ENCODE measurements at regions of chr7 and their contacts with region 1.

Region 1: GRCh38 chr7:64266341-64266919 is 38.2 kb downstream of the ZNF679 start:
- DNase-seq: no peak
- ATAC-seq: no peak
- H3K4me3 ChIP-seq: no peak overlapping the region
- H3K27ac ChIP-seq: no peak overlapping the region
- H3K4me1 ChIP-seq: no peaks in the 10 kb centered on the region
- H3K27me3 ChIP-seq: no peaks in the 10 kb centered on the region
- CTCF ChIP-seq: no peak

Region 2: GRCh38 chr7:63953181-63953580 is 313.2 kb before region 1 on chr7:
- CTCF ChIA-PET with region 1: no interaction called
- POLR2A ChIA-PET with region 1: no interaction called
- in situ Hi-C with region 1: no loop called
- intact Hi-C with region 1: no loop called
- DNase-seq: no peak
- ATAC-seq: no peak
- H3K4me3 ChIP-seq: no peak overlapping the region
- H3K27ac ChIP-seq: no peak overlapping the region
- H3K4me1 ChIP-seq: no peaks in the 10 kb centered on the region
- H3K27me3 ChIP-seq: no peaks in the 10 kb centered on the region
- CTCF ChIP-seq: no peak

Region 3: GRCh38 chr7:64183126-64183742 is 83.2 kb before region 1 on chr7:
- CTCF ChIA-PET with region 1: no interaction called
- POLR2A ChIA-PET with region 1: no interaction called
- in situ Hi-C with region 1: no loop called
- intact Hi-C with region 1: no loop called
- DNase-seq: no peak
- ATAC-seq: no peak
- H3K4me3 ChIP-seq: no peak overlapping the region
- H3K27ac ChIP-seq: no peak overlapping the region
- H3K4me1 ChIP-seq: no peaks in the 10 kb centered on the region
- H3K27me3 ChIP-seq: no peaks in the 10 kb centered on the region
- CTCF ChIP-seq: peak; percentile 70

Region 4: DNA sequence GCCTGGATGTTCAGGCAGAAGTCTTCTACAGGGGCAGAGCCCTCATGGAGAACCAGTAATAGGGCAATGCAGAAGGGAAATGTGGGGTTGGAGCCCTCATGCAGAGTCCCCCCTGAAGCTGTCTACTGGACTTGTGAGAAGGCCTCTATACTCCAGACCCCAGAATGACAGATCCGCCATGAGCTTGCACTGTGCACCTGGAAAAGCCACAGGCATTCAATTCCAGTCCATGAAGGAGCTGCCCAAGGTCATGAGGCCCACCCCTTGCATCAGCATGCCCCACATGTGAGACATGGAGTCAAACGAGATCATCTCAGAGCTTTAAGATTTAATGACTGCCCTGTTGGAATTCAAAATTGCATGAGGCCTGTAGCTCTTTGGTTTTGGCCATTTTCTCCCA is 43.1 kb before region 1 on chr7:
- CTCF ChIA-PET with region 1: no interaction called
- POLR2A ChIA-PET with region 1: no interaction called
- in situ Hi-C with region 1: no loop called
- intact Hi-C with region 1: loop called (anchors 5 kb)
- DNase-seq: no peak
- ATAC-seq: no peak
- H3K4me3 ChIP-seq: no peak overlapping the region
- H3K27ac ChIP-seq: no peak overlapping the region
- H3K4me1 ChIP-seq: no peaks in the 10 kb centered on the region
- H3K27me3 ChIP-seq: no peaks in the 10 kb centered on the region
- CTCF ChIP-seq: no peak

Region 5: GRCh38 chr7:64400401-64400800 is 134.0 kb after region 1 on chr7:
- CTCF ChIA-PET with region 1: no interaction called
- POLR2A ChIA-PET with region 1: no interaction called
- in situ Hi-C with region 1: no loop called
- intact Hi-C with region 1: no loop called
- DNase-seq: no peak
- ATAC-seq: no peak
- H3K4me3 ChIP-seq: no peak overlapping the region
- H3K27ac ChIP-seq: no peak overlapping the region
- H3K4me1 ChIP-seq: no peaks in the 10 kb centered on the region
- H3K27me3 ChIP-seq: no peaks in the 10 kb centered on the region
- CTCF ChIP-seq: no peak